ENCODE measurements at regions of chr11 and their contacts with region 1.

Region 1: GRCh38 chr11:19116971-19117750 is at the start of gene ZDHHC13:
- DNase-seq: peak; percentile 95
- H3K4me3 ChIP-seq: peak within 1 kb of the TSS; percentile 95
- H3K27ac ChIP-seq: peak within 1 kb of the TSS; percentile 47
- H3K4me1 ChIP-seq: peaks cover 21% of the 10 kb centered on the region
- CTCF ChIP-seq: peak; percentile 67
- total RNA-seq, gene ZDHHC13: 23.3 and 25.0 TPM in 2 replicates

Region 2: GRCh38 chr11:19200410-19201201 is 83.4 kb after region 1 on chr11:
- CTCF ChIA-PET with region 1: no interaction called
- POLR2A ChIA-PET with region 1: no interaction called
- intact Hi-C with region 1: no loop called
- DNase-seq: no peak
- H3K4me3 ChIP-seq: no peak overlapping the region
- H3K27ac ChIP-seq: no peak overlapping the region
- H3K4me1 ChIP-seq: no peaks in the 10 kb centered on the region
- CTCF ChIP-seq: no peak

Region 3: DNA sequence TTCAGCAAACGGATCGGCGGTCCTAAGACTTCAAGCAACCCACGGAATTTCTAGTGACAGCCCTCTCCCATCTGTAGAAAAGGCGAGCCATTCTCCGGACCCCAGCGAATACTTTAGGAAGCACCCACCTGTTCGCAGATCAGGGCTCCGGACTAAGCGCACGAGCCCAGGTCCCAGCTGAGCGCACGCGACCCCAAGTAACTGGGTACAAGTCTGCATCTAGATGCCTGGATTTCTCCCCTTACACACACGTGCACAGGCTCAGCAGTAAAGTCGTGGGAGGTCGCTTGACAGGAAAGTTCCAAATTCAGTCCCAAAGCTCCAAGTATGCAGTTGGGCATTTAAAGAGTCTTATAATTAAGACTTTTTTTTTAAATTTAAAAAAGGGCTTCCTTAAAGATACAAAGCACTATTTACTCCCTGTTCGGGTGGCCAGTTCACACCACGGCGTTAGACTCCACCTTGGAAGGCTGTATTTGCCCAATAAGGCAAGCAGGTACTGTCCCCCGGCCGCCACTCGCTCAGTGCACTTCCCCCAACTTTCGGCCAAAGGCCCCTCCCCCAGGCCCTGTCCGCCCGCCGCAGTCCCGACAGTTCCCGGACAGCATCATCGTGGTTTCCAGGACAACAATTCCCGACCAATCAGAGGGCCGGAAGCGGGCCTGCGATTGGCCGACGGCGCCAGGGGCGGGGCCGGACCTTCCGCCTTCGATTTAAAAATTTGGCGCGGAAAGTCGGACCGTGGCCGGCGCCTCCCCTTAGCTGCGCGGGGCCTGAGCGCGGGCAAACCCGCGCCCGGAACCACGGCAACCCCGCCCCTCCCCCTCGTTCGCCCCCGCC is 123.5 kb after region 1 on chr11 and contains the start of gene E2F8:
- CTCF ChIA-PET with region 1: no interaction called
- POLR2A ChIA-PET with region 1: no interaction called
- intact Hi-C with region 1: loop called (anchors 5 kb)
- DNase-seq: peak; percentile 97
- H3K4me3 ChIP-seq: peak within 1 kb of the TSS; percentile 97
- H3K27ac ChIP-seq: peak within 1 kb of the TSS; percentile 90
- H3K4me1 ChIP-seq: peaks cover 35% of the 10 kb centered on the region
- CTCF ChIP-seq: no peak
- total RNA-seq, gene E2F8: 29.3 and 46.0 TPM in 2 replicates

Region 4: GRCh38 chr11:19437760-19438159 is 320.6 kb after region 1 on chr11:
- CTCF ChIA-PET with region 1: no interaction called
- POLR2A ChIA-PET with region 1: no interaction called
- intact Hi-C with region 1: loop called (anchors 5 kb)
- DNase-seq: no peak
- H3K4me3 ChIP-seq: no peak overlapping the region
- H3K27ac ChIP-seq: no peak overlapping the region
- H3K4me1 ChIP-seq: peaks cover 67% of the 10 kb centered on the region
- CTCF ChIP-seq: no peak